ENCODE measurements at regions of chr5 and their contacts with region 1.

Region 1: GRCh38 chr5:176660860-176661641 is 13.8 kb downstream of the TSPAN17 start:
- DNase-seq: peak; percentile 69
- H3K4me3 ChIP-seq: no peak overlapping the region
- H3K27ac ChIP-seq: no peak overlapping the region
- H3K4me1 ChIP-seq: no peaks in the 10 kb centered on the region
- H3K27me3 ChIP-seq: peaks cover 0 to 10% of the 10 kb centered on the region in 2 experiments
- CTCF ChIP-seq: peak; percentile 91 to 100
- POLR2A ChIP-seq: no peak

Region 2: DNA sequence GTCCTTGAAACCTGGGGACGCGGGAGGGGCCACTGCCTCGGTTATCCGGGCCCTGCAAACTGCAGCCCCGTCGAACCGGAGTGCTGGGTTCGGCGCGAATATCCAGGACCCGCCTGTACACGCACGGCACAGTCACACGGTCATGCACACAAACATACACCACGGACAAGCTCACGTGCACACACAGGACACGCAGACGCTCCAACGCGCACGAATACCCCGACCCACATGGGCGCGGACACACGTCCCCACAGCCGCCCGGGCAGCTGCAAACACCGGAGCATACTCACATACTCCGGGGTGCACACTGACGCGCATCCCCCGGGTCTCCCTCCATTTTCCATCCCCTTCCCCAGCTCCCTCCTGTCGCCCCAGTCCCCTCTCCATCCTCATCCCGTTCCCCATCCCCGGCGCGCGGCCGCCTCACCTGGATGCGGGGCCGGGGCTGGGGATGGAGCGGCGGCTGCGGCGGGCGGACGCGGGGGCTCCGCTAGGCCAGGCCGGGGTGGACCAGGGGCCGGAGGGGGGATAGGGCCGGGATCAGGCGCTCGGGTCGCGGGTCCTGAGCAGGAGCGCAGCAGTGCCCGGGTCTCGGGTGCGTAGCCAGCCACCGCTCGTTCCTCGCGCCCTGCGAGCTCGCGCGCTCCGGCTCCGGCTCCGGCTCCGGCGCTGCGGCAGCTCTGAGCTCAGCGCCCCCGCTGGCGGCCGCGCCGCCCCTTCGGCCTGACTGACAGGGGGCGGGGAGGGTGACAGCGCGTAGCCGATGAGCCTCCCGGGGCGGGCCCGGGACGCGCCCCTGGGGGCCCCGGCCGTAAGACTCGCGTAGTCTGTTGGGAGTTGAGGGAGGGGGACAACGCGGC is 31.0 kb before region 1 on chr5 and contains the starts of genes EIF4E1B and SNCB:
- CTCF ChIA-PET with region 1: interaction called, 14 read pairs
- POLR2A ChIA-PET with region 1: no interaction called
- dilution Hi-C with region 1: no loop called
- intact Hi-C with region 1: no loop called
- DNase-seq: peak; percentile 49
- H3K4me3 ChIP-seq: peak within 1 kb of the TSS in 2 of 3 experiments; percentile 1 to 18
- H3K27ac ChIP-seq: no peak within 1 kb of the TSS
- H3K4me1 ChIP-seq: no peaks in the 10 kb centered on the region
- H3K27me3 ChIP-seq: peaks cover 59 to 61% of the 10 kb centered on the region in 2 experiments
- CTCF ChIP-seq: no peak
- POLR2A ChIP-seq: no peak
- total RNA-seq, gene EIF4E1B: not detected in 2 replicates
- total RNA-seq, gene SNCB: not detected in 2 replicates

Region 3: GRCh38 chr5:176700239-176700847 is 39.3 kb after region 1 on chr5:
- CTCF ChIA-PET with region 1: interaction called, 9 read pairs
- POLR2A ChIA-PET with region 1: no interaction called
- dilution Hi-C with region 1: no loop called
- intact Hi-C with region 1: loop called (anchors 2 kb)
- DNase-seq: peak; percentile 21
- H3K4me3 ChIP-seq: no peak overlapping the region
- H3K27ac ChIP-seq: no peak overlapping the region
- H3K4me1 ChIP-seq: no peaks in the 10 kb centered on the region
- H3K27me3 ChIP-seq: peaks cover 16 to 17% of the 10 kb centered on the region in 2 experiments
- CTCF ChIP-seq: peak; percentile 26 to 42
- POLR2A ChIP-seq: no peak

Region 4: DNA sequence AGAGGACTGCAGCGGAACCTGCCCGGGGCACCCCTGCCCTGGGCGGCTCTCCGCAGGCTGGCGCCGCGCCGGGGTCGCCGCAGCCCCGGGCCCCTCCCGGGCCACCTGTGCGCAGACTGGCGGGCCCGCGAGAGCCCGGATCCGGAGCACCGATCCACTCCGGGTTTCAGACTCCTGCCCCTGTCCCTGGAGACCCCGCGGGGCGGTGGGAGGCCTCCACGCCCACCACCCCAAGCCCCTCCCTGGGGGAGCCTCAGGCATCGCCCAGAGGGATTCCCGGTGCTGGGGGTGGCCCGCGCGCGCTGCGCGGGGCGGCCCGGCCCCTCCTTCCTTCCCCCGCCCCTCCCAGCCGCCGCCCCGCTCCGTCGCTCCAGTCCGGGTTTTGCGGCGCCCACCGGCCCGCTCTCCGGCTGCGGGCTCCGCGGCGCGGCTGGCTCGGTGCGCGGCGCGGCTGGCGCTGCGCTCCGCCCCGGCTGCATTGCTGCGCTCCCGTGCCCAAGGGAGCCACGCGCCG is 149.1 kb after region 1 on chr5 and contains the start of gene UNC5A:
- CTCF ChIA-PET with region 1: interaction called, 15 read pairs
- POLR2A ChIA-PET with region 1: no interaction called
- dilution Hi-C with region 1: no loop called
- intact Hi-C with region 1: no loop called
- DNase-seq: peak; percentile 16
- H3K4me3 ChIP-seq: peak within 1 kb of the TSS in 2 of 3 experiments; percentile 18 to 22
- H3K27ac ChIP-seq: no peak within 1 kb of the TSS
- H3K4me1 ChIP-seq: peaks cover 3% of the 10 kb centered on the region
- H3K27me3 ChIP-seq: peaks cover 18 to 25% of the 10 kb centered on the region in 2 experiments
- CTCF ChIP-seq: no peak
- POLR2A ChIP-seq: no peak
- total RNA-seq, gene UNC5A: 0.22 and 0.51 TPM in 2 replicates

Region 5: DNA sequence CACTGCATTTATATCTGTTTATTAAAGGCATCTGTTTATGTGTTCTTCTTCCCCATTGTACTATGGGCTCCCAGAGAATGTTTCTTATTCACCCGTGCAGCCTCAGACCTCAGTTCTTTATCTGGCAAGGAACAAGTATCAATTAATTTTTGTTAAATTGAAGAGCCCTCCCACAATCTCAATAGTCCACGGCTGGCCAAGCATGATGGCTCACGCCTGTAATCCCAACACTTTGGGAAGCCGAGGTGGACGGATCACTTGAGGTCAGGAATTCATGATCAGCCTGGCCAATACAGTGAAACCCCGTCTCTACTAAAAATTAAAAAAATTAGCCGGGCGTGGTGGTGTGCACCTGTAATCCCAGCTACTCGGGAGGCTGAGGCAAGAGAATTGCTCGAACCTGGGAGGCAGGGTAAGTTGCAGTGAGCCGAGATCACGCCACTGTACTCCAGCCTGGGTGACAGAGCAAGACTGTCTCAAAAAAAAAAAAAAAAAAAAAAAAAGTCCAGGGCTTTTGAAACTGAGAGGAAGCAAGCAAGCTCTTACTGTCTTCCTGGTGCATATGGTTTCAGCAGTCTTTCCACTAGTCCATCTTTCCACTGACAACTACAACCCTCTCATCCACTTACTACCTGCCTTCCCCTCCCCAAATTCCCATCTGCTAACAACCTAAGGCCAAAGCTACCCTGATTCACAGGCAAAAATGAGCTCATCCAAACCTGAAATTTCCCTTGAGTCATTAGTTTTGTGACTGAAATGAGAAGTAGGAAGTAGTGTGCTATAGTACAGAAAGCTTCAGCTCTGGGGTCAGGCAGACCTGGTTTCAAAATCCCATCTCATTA is 240.4 kb after region 1 on chr5:
- CTCF ChIA-PET with region 1: interaction called, 42 read pairs
- POLR2A ChIA-PET with region 1: no interaction called
- dilution Hi-C with region 1: no loop called
- intact Hi-C with region 1: no loop called
- DNase-seq: no peak
- H3K4me3 ChIP-seq: no peak overlapping the region
- H3K27ac ChIP-seq: no peak overlapping the region
- H3K4me1 ChIP-seq: peaks cover 11% of the 10 kb centered on the region
- H3K27me3 ChIP-seq: no peaks in the 10 kb centered on the region
- CTCF ChIP-seq: no peak
- POLR2A ChIP-seq: no peak

Region 6: DNA sequence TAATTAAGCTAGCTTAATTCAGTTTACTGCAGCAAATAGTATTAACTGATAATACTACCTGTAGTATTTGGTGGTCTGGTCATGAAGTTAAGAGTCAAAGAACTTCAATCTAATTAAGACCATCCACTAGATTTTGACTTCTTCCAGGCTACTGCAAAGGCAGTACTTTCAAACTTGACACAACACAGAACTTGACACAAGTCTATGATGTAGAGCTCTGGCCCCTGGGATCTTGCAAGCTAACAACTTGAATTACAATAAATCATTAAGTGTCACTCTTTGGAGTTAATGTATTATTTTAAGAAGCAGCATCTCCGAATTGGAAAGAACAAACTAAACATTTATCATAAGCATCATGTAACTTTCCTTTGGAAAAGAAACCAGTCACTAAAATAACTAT is 304.6 kb after region 1 on chr5:
- CTCF ChIA-PET with region 1: interaction called, 15 read pairs
- POLR2A ChIA-PET with region 1: no interaction called
- dilution Hi-C with region 1: no loop called
- intact Hi-C with region 1: no loop called
- DNase-seq: no peak
- H3K4me3 ChIP-seq: no peak overlapping the region
- H3K27ac ChIP-seq: no peak overlapping the region
- H3K4me1 ChIP-seq: no peaks in the 10 kb centered on the region
- H3K27me3 ChIP-seq: no peaks in the 10 kb centered on the region
- CTCF ChIP-seq: no peak
- POLR2A ChIP-seq: no peak

Measured in endothelial cell of umbilical vein (primary cell).